OCI-LY7 (cell line): ENCODE measurements at regions of chr6 and their contacts with region 1.

Region 1: GRCh38 chr6:26243132-26243531 is 121.9 kb upstream of the BTN3A2 start:
- DNase-seq: no peak
- H3K4me3 ChIP-seq: no peak overlapping the region
- H3K27ac ChIP-seq: no peak overlapping the region
- H3K4me1 ChIP-seq: peaks cover 5% of the 10 kb centered on the region
- CTCF ChIP-seq: no peak

Region 2: GRCh38 chr6:25991785-25992412 is 251.2 kb before region 1 on chr6:
- CTCF ChIA-PET with region 1: no interaction called
- POLR2A ChIA-PET with region 1: no interaction called
- intact Hi-C with region 1: no loop called
- DNase-seq: peak; percentile 74
- H3K4me3 ChIP-seq: peak overlapping the region; percentile 70
- H3K27ac ChIP-seq: peak overlapping the region; percentile 63
- H3K4me1 ChIP-seq: peaks cover 44% of the 10 kb centered on the region
- CTCF ChIP-seq: no peak

Region 3: DNA sequence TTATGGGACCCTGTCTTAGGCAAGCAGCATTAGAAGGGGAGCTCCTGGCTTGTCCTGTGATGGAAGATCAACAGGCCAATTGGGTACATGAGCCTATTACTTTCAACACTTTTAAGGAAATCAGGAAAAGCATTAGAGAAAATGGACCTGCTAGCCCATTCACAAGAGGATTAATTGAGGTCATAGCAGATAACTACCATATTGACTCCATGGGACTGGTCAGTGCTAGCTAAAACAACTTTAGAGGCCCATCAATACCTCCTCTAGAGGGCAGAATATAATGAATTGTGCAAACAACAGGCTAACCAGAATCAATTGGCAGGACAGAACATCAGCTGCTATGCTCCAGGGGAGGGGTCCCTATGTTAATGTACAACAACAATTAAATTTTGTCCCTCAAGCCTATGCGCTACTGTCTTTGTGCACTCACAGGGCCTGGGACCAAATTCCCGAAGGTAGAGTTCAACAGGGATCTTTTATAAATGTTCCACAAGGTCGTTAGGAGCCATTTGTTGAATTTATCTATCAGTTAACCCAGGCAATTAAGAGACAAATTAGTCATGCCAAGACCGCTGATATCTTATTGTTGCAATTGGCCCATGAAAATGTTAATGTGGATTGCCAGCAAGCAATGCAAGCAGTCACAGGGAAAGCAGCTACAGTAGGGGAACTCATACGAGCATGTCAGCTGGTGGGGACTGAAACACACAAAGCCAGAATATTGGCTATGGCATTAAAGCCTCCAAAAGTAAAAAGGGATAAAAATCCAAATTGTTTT is 15.3 kb after region 1 on chr6:
- CTCF ChIA-PET with region 1: no interaction called
- POLR2A ChIA-PET with region 1: interaction called, 55 read pairs
- intact Hi-C with region 1: loop called (anchors 2 kb)
- DNase-seq: peak; percentile 33
- H3K4me3 ChIP-seq: no peak overlapping the region
- H3K27ac ChIP-seq: no peak overlapping the region
- H3K4me1 ChIP-seq: peaks cover 12% of the 10 kb centered on the region
- CTCF ChIP-seq: peak; percentile 70